AG04450 (cell line): ENCODE measurements at regions of chr22 and their contacts with region 1.

Region 1: DNA sequence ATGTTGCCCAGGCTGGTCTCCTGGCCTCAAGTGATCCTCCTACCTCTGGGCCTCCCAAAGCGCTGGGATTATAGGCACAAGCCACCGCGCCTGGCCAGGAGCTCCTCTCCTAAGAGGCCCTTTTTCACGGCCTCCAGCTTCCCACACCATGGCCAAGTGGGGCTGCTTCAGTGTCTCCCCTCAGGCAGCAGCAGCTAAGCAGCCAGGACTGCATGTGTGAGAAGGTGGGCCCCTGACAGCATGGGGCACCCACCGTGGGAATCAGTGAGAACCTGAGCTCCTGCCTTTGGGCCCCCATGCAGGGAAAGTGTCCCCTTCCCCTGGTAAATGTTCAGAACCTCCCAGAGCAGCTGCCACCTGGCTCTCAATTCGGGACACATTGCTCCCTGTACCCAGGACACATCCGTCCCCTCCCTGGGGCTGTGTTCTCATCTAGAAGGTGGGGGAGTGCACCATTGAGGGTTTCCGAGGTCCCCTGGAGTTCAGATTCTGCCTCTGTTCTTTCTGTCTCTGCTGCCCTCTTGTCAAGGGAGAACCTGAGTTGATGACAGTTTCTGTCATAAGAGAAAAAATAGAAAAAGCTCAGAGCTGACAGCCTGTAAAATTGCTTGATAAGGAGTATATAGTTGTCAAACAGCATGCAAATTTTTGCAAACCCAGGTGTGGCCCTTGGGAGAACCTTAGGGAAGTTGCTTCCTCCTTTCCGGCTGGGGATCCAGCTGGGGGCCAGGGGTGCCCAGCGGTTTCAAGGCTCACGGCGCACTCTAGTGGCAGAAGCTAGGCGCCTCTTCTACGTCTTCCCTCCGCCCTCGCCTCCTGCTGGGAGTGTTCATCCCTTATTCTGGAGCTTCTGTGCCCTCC is 29.7 kb downstream of the FAM83F start:
- DNase-seq: no peak
- H3K4me3 ChIP-seq: no peak overlapping the region
- H3K27ac ChIP-seq: no peak overlapping the region
- H3K27me3 ChIP-seq: peaks cover 17% of the 10 kb centered on the region
- CTCF ChIP-seq: peak; percentile 96

Region 2: DNA sequence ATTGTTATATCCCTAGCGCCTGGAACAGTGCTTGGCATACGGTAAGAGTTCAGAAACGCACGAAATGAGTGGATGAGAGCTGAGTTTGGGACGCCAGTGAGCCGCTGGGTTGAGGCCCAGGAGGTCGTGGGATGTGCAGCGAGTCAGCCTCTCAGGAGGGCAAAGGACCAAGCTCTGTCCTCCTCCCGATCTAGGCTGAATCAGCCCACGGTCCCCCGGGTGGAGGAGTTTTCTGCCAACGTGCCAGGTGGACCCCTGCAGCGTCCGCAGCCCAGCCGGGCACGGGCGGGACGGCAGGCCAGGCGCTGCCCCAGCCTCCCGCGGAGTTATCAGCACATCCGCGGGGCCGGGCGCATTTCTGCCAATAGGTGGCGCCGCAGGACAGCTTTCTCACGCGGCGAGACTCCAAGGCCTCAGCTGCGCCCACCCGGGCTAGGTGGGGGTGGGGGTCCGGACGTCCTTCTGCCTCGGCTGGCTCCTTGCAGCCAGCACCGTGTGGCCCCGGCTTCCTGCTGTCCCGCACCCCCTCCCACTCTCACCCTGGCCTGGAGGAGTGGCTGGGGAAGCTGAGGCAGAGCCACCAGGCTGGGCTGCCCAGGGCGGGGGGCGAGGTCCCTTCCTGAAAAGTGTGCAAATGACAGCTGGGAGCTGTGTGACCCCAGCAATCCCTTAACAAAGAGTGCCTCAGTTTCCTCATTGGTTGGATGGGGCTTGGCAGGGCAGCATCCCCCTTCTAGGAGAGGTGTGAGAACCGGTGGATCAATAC is 489.7 kb before region 1 on chr22:
- CTCF ChIA-PET with region 1: interaction called, 119 read pairs
- POLR2A ChIA-PET with region 1: no interaction called
- DNase-seq: no peak
- H3K4me3 ChIP-seq: no peak overlapping the region
- H3K27ac ChIP-seq: peak overlapping the region; percentile 1
- H3K27me3 ChIP-seq: peaks cover 3% of the 10 kb centered on the region
- CTCF ChIP-seq: peak; percentile 82

Region 3: DNA sequence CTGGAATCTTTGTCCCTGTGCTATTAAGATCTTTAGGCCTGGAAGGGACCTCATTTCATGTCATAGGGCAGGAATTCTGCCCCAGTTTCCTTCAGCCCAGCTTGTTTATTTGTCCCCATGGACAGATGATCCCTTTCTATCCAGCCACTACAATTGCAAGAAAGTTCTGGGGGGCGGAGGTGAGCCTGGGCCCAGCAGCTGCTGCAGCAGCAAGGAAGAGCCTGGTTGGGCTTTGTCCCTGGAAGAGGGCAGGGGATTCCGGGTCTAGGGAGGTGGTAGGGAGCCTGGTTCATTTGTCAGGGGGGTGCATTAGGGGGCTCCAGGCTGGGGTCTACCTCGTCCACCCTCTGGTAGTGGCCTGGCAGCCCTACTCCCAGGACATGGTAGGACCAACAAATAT is 470.3 kb before region 1 on chr22:
- CTCF ChIA-PET with region 1: interaction called, 14 read pairs
- POLR2A ChIA-PET with region 1: no interaction called
- DNase-seq: no peak
- H3K4me3 ChIP-seq: no peak overlapping the region
- H3K27ac ChIP-seq: peak overlapping the region; percentile 21
- H3K27me3 ChIP-seq: peaks cover 63% of the 10 kb centered on the region
- CTCF ChIP-seq: no peak

Region 4: DNA sequence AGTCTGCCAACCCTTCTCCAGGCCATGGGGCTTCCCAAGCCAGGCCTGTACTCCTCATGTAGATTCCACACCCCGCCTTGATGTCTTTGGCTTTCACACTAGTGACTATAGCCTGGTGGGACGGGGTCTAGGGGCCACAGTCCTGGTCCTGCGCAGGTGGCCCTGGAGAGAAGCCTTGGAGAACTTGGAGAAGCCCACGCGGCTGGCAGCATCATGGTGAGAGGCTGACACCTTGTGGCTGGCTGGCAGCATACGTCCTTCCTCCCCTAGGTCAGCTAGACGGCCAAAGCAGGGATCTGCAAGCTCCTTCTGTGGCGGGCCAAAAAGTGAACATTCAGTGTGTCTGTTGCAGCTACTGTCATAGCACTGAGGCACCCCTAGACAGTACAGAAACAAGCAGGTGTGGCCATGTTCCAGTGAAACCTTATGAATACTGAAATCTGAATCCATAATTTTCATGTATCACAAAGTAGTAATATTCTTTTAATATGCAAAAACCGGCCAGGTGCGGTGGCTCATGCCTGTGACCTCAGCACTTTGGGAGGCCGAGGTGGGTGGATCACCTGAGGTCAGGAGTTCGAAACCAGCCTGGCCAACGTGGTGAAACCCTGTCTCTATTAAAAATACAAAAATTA is 12.3 kb after region 1 on chr22:
- CTCF ChIA-PET with region 1: interaction called, 12 read pairs
- POLR2A ChIA-PET with region 1: no interaction called
- DNase-seq: peak; percentile 58
- H3K4me3 ChIP-seq: no peak overlapping the region
- H3K27ac ChIP-seq: no peak overlapping the region
- H3K27me3 ChIP-seq: peaks cover 69% of the 10 kb centered on the region
- CTCF ChIP-seq: peak; percentile 88